ENCODE measurements at regions of chr10 and their contacts with region 1.

Region 1: DNA sequence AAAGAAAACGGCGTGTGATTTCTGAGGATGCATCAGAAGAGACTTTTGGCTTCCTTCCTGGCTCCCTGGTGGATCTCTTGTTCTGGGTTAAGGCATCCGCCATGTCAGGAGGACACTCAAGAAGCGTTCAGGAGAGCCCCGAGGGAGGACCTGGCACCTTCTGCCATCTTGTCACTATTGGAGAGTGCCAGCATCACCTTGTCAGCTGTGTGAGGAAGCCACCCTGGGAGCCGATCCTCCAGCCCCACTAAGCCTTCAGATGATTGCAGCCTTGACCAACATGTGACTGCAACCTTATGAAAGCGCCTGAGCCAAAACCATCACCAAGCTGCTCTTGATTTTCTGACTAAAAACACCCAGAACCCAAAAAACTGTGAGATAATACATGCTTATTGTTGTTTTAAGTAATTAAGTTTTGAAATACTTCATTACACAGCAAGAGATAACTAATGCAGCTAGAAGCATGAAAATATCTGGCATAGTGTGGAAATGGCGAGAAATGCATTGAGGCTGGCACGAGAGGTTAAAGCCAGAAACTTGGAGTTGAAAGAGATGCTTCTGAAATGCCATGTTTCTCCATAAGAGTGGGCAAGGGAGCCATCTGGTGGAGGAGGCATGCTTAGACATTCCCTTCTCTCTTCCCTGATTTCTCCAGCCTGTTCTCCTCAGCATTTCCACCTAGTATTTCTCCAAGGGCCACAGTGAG is 5.4 kb upstream of the ZFYVE27 start:
- H3K4me3 Mint-ChIP-seq: no peak overlapping the region
- H3K27ac Mint-ChIP-seq: no peak overlapping the region
- H3K4me1 Mint-ChIP-seq: peaks cover 11% of the 10 kb centered on the region
- H3K27me3 Mint-ChIP-seq: no peaks in the 10 kb centered on the region

Region 2: DNA sequence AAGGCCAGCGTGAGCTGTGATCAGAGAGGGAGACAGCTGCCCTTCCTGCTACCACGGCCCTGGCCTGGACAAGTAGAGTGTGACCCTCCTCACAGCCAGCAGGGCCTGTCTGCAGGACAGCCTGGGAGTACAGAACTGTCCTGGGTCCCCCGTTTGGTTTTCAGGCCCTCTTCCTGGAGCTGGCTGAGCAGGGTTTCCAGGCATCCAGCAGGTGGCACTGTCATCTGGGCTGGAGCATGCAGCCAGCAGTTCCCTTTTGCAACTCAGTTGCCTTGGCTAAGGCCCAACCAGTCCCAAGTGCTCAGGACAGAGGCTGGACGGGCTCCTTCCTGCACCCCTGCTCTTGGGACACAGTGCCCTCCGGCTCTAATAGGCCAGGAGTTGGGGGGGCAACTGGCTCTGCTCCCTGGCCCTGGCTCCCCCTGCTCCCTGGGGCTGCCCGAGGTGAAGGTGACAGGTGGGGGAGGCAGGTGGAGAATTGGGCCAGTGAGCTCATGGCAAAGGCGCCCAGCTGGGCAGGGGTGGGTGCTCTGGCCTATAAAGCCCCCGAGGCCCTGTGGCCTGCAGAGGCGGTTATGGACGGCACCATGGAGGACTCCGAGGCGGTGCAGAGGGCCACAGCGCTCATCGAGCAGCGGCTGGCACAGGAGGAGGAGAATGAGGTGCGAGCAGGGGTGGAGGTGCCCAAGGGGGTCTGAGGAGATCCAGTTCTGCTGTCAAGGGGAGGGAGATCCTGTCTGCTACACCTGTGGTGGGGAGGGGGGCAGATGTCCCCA is 159.1 kb before region 1 on chr10 and contains the start of gene ANKRD2:
- intact Hi-C with region 1: loop called (anchors 1 kb)
- H3K4me3 Mint-ChIP-seq: no peak within 1 kb of the TSS
- H3K27ac Mint-ChIP-seq: no peak within 1 kb of the TSS
- H3K4me1 Mint-ChIP-seq: no peaks in the 10 kb centered on the region
- H3K27me3 Mint-ChIP-seq: peaks cover under 1% of the 10 kb centered on the region

Region 3: DNA sequence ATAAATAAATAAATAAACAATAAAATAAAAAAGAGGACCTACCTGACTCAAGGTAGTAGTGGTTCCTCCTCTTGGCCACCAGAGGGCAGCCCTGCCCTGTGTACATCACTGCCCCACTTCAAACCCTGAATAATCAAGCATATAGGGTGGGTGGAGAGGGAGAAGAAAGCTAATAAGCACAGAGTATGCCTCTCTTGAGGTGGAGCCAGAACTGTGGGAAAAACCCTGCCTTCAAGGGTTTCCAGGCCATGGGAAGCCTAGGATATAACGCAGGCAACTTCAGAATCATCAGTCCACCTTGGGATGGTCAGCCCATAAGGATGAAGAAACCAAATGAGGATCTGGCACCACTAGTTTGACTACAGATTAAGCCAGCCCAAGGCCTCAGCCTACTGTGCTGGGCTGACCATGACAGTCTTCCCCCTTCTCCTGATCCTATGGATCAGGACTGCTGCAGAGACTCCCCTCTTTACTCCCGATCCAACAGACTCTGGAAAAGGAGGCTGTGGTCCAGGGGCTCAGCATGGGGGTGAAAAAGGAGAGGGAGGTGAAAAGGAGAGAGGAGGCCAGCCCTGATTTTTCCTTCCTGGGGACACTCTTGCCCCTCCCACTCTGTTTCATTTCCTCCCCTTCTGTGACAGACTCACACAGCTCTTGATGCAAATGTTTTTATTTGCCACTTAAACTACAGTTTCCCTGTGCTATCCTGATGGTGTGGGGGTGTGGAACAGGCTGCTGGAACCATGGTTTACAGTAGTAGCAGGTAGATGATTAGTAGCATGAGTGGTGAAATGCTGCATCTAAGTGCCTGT is 54.5 kb before region 1 on chr10:
- intact Hi-C with region 1: loop called (anchors 1 kb)
- H3K4me3 Mint-ChIP-seq: no peak overlapping the region
- H3K27ac Mint-ChIP-seq: peak overlapping the region; percentile 77
- H3K4me1 Mint-ChIP-seq: peaks cover 50% of the 10 kb centered on the region
- H3K27me3 Mint-ChIP-seq: no peaks in the 10 kb centered on the region

Region 4: GRCh38 chr10:97701438-97702069 is 29.9 kb before region 1 on chr10:
- intact Hi-C with region 1: loop called (anchors 5 kb)
- H3K4me3 Mint-ChIP-seq: no peak overlapping the region
- H3K27ac Mint-ChIP-seq: no peak overlapping the region
- H3K4me1 Mint-ChIP-seq: peaks cover 12% of the 10 kb centered on the region
- H3K27me3 Mint-ChIP-seq: peaks cover 5% of the 10 kb centered on the region

Region 5: DNA sequence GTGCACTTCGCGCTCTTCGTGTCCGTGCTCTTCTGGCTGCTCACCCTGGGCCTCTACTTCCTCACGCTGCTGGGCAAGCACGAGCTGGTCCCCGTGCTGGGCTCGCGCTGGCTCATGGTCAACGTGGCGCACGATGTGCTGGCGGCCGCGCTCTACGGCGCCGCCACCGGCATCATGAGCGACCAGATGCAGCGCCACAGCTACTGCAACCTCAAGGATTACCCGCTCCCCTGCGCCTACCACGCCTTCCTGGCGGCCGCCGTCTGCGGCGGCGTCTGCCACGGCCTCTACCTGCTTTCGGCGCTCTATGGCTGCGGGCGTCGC is 17.5 kb before region 1 on chr10:
- intact Hi-C with region 1: loop called (anchors 1 kb)
- H3K4me3 Mint-ChIP-seq: peak overlapping the region; percentile 98
- H3K27ac Mint-ChIP-seq: peak overlapping the region; percentile 97
- H3K4me1 Mint-ChIP-seq: peaks cover 73% of the 10 kb centered on the region
- H3K27me3 Mint-ChIP-seq: peaks cover 4% of the 10 kb centered on the region

Measured in dendritic cell treated with granulocyte-macrophage colony-stimulating factor and Interleukin-4, amounts not matched to agents 40 ng/mL and 50 ng/mL, for 4 days (primary cell).